HepG2 (cell line): ENCODE measurements at regions of chr4 and their contacts with region 1.

Region 1: GRCh38 chr4:159206427-159206871 is 103.6 kb downstream of the RAPGEF2 start:
- DNase-seq: no peak
- ATAC-seq: no peak
- H3K4me3 ChIP-seq: no peak overlapping the region
- H3K27ac ChIP-seq: no peak overlapping the region
- H3K4me1 ChIP-seq: peaks cover 13% of the 10 kb centered on the region
- H3K27me3 ChIP-seq: no peaks in the 10 kb centered on the region
- CTCF ChIP-seq: no peak
- EP300 ChIP-seq: no peak
- POLR2A ChIP-seq: no peak
- RAD21 ChIP-seq: no peak

Region 2: DNA sequence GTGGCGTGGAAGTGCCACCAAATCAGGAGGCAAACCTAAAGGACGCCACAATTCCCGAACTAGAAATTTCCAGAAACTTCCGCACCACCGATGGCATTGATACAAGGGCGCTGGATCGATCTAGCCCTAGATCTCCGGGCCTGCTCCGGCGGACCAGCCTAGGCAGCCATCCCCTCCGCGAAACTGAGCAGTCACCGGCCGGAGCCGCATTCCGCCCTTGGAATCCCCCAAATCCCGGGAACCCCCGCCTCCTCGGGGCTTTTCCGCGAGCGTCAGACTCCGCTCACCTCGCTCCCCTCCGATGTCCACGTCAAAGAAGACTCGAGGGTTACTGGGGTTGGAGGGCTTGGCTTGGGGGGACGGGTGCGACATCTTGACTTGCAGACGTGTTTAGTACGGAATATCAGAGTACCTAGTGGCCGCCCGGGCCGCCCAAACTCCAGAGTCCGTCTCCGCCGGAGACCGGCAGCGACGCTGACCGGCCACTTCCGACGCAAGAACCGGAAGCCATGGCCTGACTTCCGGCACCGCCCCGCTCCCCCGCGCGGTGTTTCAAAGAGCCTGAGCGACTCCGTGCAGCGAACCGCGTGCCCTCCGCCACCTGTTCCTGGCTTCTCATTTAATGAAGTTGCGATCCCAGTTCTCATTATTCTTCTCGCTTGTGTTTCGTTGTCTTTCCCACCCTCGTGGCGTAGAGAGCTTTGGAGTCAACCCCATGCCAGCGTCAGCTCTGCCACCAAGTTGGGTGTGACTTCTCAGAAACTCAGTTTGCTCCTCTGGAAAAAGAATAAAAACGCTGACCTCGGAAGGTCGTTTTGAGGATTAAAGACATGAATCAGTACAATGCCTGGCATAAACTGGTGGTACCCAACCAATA is 483.3 kb before region 1 on chr4 and contains the start of gene PPID:
- CTCF ChIA-PET with region 1: no interaction called
- POLR2A ChIA-PET with region 1: no interaction called
- in situ Hi-C with region 1: loop called (anchors 10 kb)
- intact Hi-C with region 1: no loop called
- DNase-seq: peak; percentile 77
- ATAC-seq: peak; percentile 98
- H3K4me3 ChIP-seq: peak within 1 kb of the TSS; percentile 80 to 96 (median 93)
- H3K27ac ChIP-seq: peak within 1 kb of the TSS; percentile 81
- H3K4me1 ChIP-seq: peaks cover 40% of the 10 kb centered on the region
- H3K27me3 ChIP-seq: no peaks in the 10 kb centered on the region; a peak in 1 of 5 replicates
- CTCF ChIP-seq: 0 out of 2 replicates have a peak, but pooled peaks have one; percentile 9
- EP300 ChIP-seq: 0 out of 4 replicates have a peak, but pooled peaks of 1 of the 2 experiments have one; percentile 15
- POLR2A ChIP-seq: peak; percentile 84 to 87
- RAD21 ChIP-seq: peak; percentile 49; the same call in 1 of the 2 replicates
- total RNA-seq, gene PPID: 63.4 and 73.3 TPM in 2 replicates

Region 3: GRCh38 chr4:159298502-159298901 is 92.1 kb after region 1 on chr4:
- CTCF ChIA-PET with region 1: no interaction called
- POLR2A ChIA-PET with region 1: no interaction called
- in situ Hi-C with region 1: no loop called
- intact Hi-C with region 1: no loop called
- DNase-seq: no peak
- ATAC-seq: no peak
- H3K4me3 ChIP-seq: no peak overlapping the region
- H3K27ac ChIP-seq: no peak overlapping the region
- H3K4me1 ChIP-seq: peaks cover 7% of the 10 kb centered on the region; the same call in 1 of the 2 replicates
- H3K27me3 ChIP-seq: no peaks in the 10 kb centered on the region
- CTCF ChIP-seq: no peak
- EP300 ChIP-seq: no peak
- POLR2A ChIP-seq: no peak
- RAD21 ChIP-seq: no peak

Region 4: DNA sequence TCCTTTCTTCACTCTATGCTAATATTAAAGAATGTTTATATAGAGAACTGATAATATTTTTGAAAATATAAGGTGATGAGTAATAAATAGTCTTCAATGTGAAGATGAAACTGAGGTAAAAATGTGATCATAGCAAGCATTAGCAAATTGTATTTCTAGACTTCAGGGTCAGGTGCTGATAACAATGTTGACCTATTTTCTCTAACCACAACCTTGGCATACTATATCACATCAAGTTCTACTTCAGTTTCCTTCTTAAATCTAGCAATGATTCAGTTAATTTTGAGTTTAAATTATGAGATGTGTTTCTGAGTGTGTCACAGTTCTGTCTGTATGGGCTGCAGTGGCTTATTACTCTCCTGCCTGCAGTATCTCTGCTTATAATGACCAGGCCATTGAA is 105.8 kb after region 1 on chr4:
- CTCF ChIA-PET with region 1: no interaction called
- POLR2A ChIA-PET with region 1: no interaction called
- in situ Hi-C with region 1: no loop called
- intact Hi-C with region 1: loop called (anchors 10 kb)
- DNase-seq: no peak
- ATAC-seq: no peak
- H3K4me3 ChIP-seq: no peak overlapping the region
- H3K27ac ChIP-seq: no peak overlapping the region
- H3K4me1 ChIP-seq: no peaks in the 10 kb centered on the region
- H3K27me3 ChIP-seq: no peaks in the 10 kb centered on the region
- CTCF ChIP-seq: no peak
- EP300 ChIP-seq: no peak
- POLR2A ChIP-seq: no peak
- RAD21 ChIP-seq: no peak

Region 5: GRCh38 chr4:159446266-159446976 is 240.0 kb after region 1 on chr4:
- CTCF ChIA-PET with region 1: no interaction called
- POLR2A ChIA-PET with region 1: no interaction called
- in situ Hi-C with region 1: no loop called
- intact Hi-C with region 1: loop called (anchors 2 kb)
- DNase-seq: peak; percentile 72
- ATAC-seq: peak; percentile 100
- H3K4me3 ChIP-seq: no peak overlapping the region
- H3K27ac ChIP-seq: no peak overlapping the region
- H3K4me1 ChIP-seq: peaks cover 6% of the 10 kb centered on the region; the same call in 1 of the 2 replicates
- H3K27me3 ChIP-seq: no peaks in the 10 kb centered on the region
- CTCF ChIP-seq: peak; percentile 93
- EP300 ChIP-seq: no peak
- POLR2A ChIP-seq: no peak
- RAD21 ChIP-seq: peak; percentile 87